MCF 10A (cell line): ENCODE measurements at regions of chr15 and their contacts with region 1.

Region 1: DNA sequence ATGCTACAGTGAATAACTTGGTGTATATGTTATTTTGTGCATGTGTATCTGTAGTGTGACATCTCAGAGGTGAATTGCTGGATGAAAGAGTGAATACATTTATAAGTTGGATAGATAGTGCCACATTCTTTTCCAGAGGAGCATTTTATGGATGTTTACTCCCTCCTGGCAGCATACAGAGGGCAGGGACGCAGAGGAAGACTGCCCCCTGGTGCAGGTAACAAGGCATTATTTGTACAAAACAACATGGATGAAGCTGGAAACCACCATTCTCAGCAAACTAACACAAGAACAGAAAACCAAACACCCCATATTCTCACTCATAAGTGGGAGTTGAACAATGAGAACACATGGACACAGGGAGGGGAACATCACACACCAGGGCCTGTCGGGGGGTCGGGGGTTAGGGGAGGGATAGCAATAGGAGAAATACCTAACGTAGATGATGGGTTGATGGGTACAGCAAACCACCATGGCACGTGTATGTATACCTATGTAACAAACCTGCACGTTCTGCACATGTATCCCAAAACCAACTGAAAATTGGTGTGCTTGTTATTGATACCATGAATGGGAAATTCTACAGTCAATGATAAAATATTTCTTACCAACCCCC is 57.9 kb upstream of the CTXND1 start:
- DNase-seq: peak; percentile 43
- H3K4me3 Mint-ChIP-seq: no peak overlapping the region
- H3K27ac Mint-ChIP-seq: no peak overlapping the region
- H3K4me1 Mint-ChIP-seq: no peaks in the 10 kb centered on the region
- H3K27me3 Mint-ChIP-seq: peaks cover 17% of the 10 kb centered on the region
- CTCF ChIP-seq: peak; percentile 65

Region 2: DNA sequence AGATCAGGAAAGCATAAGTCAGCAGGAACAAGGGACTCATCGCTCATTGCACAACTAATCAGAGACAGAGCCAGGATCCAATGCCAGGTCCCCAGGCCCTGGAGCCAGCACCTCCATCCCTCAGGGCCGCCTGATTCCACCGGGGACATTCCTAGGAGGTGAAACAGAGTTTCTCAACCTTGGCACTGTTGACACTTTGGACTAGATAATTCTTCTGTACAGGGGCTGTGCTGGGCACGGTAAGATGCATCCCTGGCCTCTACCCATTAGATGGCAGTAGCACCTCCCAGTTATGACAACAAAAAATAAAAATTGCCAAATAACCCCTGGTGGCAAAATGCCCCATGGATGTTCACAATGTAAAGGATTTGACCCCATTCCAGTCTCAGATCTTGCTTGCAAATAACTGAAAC is 540.8 kb before region 1 on chr15:
- CTCF ChIA-PET with region 1: no interaction called
- POLR2A ChIA-PET with region 1: no interaction called
- intact Hi-C with region 1: loop called (anchors 5 kb)
- DNase-seq: peak; percentile 85
- H3K4me3 Mint-ChIP-seq: no peak overlapping the region
- H3K27ac Mint-ChIP-seq: no peak overlapping the region
- H3K4me1 Mint-ChIP-seq: peaks cover 12% of the 10 kb centered on the region
- H3K27me3 Mint-ChIP-seq: peaks cover 32% of the 10 kb centered on the region
- CTCF ChIP-seq: peak; percentile 60

Region 3: GRCh38 chr15:80173022-80173759 is 136.7 kb before region 1 on chr15:
- CTCF ChIA-PET with region 1: interaction called, 3 read pairs
- POLR2A ChIA-PET with region 1: no interaction called
- intact Hi-C with region 1: loop called (anchors 10 kb)
- DNase-seq: peak; percentile 97
- H3K4me3 Mint-ChIP-seq: no peak overlapping the region
- H3K27ac Mint-ChIP-seq: no peak overlapping the region
- H3K4me1 Mint-ChIP-seq: peaks cover 46% of the 10 kb centered on the region
- H3K27me3 Mint-ChIP-seq: no peaks in the 10 kb centered on the region
- CTCF ChIP-seq: peak; percentile 87

Region 4: DNA sequence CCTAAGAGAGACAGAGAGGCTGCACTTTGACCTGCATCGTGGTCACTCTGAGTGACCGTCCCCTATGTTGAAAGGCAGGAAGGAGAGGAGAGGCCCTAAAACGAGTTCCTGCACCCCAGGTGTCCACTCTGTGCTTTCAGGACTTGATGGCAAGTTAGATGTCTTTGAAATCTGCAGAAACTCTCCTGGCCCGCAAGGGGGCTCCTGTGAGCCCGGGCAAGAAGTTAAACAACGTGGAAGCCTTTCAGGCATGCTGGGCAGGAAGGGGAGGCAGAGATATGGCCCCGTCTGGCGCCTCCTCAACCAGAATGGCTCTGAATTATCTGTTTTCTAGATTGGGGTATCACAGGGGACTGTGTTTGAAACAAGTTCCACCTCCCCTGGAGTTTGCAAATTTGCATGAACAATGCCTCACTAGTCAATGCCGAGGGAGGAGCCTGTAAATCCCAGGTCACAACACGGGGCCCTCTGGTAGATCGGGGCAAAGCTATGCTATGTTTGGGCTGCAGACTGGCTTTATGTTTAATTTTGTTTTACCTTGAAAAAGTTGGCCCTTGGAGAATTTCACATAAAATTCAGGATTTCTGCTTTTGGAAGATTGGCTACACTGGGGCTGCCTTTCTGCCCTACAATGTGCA is 67.6 kb before region 1 on chr15:
- CTCF ChIA-PET with region 1: interaction called, 4 read pairs
- POLR2A ChIA-PET with region 1: no interaction called
- intact Hi-C with region 1: loop called (anchors 1 kb)
- DNase-seq: peak; percentile 51
- H3K4me3 Mint-ChIP-seq: no peak overlapping the region
- H3K27ac Mint-ChIP-seq: no peak overlapping the region
- H3K4me1 Mint-ChIP-seq: no peaks in the 10 kb centered on the region
- H3K27me3 Mint-ChIP-seq: no peaks in the 10 kb centered on the region
- CTCF ChIP-seq: peak; percentile 44

Region 5: GRCh38 chr15:80450811-80451321 is 141.0 kb after region 1 on chr15:
- CTCF ChIA-PET with region 1: no interaction called
- POLR2A ChIA-PET with region 1: no interaction called
- intact Hi-C with region 1: no loop called
- DNase-seq: no peak
- H3K4me3 Mint-ChIP-seq: no peak overlapping the region
- H3K27ac Mint-ChIP-seq: no peak overlapping the region
- H3K4me1 Mint-ChIP-seq: peaks cover 9% of the 10 kb centered on the region
- H3K27me3 Mint-ChIP-seq: no peaks in the 10 kb centered on the region
- CTCF ChIP-seq: no peak